Colonic mucosa (tissue), 4 donors: ENCODE measurements at regions of chr2 and their contacts with region 1.

Region 1: DNA sequence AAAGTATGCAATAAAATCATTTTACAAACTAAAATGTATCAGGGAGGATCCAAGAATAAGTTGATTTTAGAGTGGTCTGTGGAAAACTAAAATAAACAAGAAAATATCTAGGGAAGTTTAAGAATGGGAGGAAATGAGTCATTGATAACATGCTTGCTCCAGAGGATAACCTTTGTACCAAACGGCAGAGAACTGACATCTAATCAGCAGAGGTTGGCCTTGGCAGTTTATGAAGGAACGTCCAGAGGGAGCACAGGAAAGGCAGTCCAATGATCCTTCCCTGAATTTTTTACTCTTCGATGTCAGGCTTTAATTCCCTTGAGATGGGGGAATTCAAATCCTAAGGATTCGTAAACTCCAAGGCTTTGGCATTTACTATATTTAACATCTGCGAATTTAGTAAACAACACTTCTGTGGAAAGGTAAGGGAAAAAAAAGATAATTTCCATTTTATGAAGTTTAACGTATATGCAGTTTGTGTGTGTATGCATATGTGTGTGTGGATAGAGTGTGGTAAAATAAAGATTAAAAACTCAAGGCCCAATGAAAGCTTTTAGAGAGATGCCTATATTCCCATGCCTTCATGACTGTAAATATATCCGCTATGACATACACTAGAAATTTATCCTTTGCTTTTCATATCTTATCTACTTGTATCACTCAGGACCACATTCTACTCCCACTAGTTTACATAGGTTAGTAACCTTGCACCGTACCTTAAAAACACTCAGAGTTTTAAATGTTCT is 8.7 kb upstream of the INPP1 start:
- DNase-seq: peak; percentile 71
- H3K4me3 ChIP-seq: no peak overlapping the region
- H3K27ac ChIP-seq: peak overlapping the region; percentile 7
- H3K4me1 ChIP-seq: no peaks in the 10 kb centered on the region
- H3K27me3 ChIP-seq: no peaks in the 10 kb centered on the region
- CTCF ChIP-seq: no peak

Region 2: GRCh38 chr2:190369635-190370034 is 35.0 kb after region 1 on chr2:
- intact Hi-C with region 1: loop called (anchors 5 kb)
- DNase-seq: no peak
- H3K4me3 ChIP-seq: no peak overlapping the region
- H3K27ac ChIP-seq: no peak overlapping the region
- H3K4me1 ChIP-seq: no peaks in the 10 kb centered on the region
- H3K27me3 ChIP-seq: no peaks in the 10 kb centered on the region
- CTCF ChIP-seq: no peak